ENCODE measurements at regions of chr4 and their contacts with region 1.

Region 1: GRCh38 chr4:114386637-114387233 is 211.9 kb upstream of the UGT8 start:
- DNase-seq: peak; percentile 4
- ATAC-seq: no peak
- H3K4me3 Mint-ChIP-seq: no peak overlapping the region
- H3K27ac Mint-ChIP-seq: no peak overlapping the region
- H3K4me1 Mint-ChIP-seq: no peaks in the 10 kb centered on the region
- H3K27me3 Mint-ChIP-seq: peaks cover 5% of the 10 kb centered on the region
- CTCF ChIP-seq: peak; percentile 80

Region 2: DNA sequence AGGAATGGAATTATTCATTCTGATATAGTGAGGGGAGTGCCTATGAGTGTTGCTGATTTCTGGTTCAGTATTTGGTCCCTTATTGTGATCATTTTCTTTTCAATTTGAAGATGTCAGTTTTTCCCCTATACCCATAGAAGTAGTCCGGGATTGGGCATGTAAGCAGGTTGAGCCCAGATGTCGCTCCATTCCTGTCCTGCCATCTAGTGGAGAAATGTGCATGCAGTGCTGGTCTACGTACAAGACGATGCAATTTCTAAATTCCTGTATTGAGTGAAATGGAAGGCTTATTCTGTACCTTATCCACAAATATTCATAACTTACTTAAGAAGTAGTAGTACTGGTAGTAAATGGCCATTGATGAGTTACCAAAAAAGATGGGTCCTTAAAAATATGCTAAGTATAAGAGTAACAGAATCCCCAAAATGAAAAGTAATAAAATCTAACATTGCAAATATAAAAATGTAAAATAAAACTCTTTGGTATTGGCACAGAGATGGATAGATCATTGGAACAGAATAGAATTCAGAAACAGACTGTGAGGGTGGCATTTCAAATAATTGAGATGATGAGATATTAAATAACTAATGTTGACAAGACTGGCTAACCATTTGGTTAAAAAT is 272.8 kb after region 1 on chr4:
- CTCF ChIA-PET with region 1: interaction called, 7 read pairs
- POLR2A ChIA-PET with region 1: no interaction called
- intact Hi-C with region 1: loop called (anchors 5 kb)
- DNase-seq: peak; percentile 63
- ATAC-seq: peak; percentile 71
- H3K4me3 Mint-ChIP-seq: no peak overlapping the region
- H3K27ac Mint-ChIP-seq: no peak overlapping the region
- H3K4me1 Mint-ChIP-seq: no peaks in the 10 kb centered on the region
- H3K27me3 Mint-ChIP-seq: peaks cover 22% of the 10 kb centered on the region
- CTCF ChIP-seq: peak; percentile 81

Region 3: DNA sequence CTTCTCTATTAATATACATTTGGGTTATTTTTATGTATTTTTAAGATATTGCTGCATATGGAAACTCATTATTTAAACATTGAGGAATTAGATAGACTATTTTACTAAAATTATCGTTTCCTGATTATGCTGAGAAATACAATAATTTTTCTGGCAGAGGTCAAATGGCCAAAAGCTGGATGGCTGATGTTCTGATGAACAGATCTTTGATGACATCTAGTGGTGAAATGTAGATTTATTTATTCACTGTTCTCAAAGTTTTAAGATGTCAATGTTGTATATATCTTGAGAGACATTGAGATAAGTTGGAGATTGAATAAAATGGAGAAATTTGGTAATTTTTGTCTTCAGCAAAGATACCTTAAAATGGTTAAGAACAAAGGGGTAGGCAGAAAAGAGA is 308.0 kb after region 1 on chr4:
- CTCF ChIA-PET with region 1: interaction called, 9 read pairs
- POLR2A ChIA-PET with region 1: no interaction called
- intact Hi-C with region 1: loop called (anchors 5 kb)
- DNase-seq: no peak
- ATAC-seq: no peak
- H3K4me3 Mint-ChIP-seq: no peak overlapping the region
- H3K27ac Mint-ChIP-seq: no peak overlapping the region
- H3K4me1 Mint-ChIP-seq: no peaks in the 10 kb centered on the region
- H3K27me3 Mint-ChIP-seq: peaks cover 1% of the 10 kb centered on the region
- CTCF ChIP-seq: peak; percentile 70